ENCODE measurements at regions of chr10 and their contacts with region 1.

Region 1: DNA sequence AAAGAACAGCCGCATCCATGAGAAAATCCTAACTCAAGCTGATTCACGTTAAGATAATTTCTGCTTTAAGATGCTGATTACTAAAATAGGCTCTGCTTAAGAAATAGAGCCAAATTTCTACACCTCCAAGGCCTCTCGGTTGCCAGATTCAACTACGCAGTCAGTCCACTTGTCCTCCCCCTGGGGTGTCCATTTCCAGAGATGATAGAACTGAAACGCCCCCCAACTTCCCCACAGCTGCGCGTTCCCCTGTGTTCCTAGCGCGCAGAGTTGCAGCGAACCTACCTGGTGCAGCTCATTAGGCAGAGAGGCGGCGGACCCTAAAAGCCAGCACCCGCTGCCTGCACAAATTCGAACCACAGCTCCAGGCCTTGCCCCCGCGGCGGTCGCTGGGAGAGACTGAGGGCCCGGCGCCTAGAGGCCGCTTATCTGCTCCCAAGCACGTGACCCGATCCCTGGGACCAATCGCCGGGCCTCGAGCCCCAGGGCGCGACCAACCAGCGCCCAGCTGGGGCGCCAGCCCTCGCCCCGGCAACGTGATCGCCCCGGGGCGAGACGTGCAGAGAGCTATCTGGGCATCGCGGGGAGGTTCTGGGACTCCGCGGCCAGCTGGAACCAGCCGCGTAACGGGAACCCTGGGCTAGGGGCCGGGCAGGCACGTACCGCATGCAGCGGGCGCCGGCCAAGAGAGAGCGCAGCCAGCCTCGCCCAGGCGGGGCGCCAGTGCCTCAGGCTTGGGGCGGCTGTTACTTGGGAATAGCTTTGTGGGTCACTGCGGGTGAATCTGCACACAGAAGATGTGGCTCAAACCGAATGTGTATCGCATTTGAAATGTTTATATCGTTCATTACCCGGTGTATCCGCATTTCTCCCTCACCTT is at the start of gene PPP1R3C:
- DNase-seq: peak; percentile 88
- H3K4me3 ChIP-seq: peak within 1 kb of the TSS; percentile 47 to 57
- H3K27ac ChIP-seq: peak within 1 kb of the TSS; percentile 58 to 69
- H3K4me1 ChIP-seq: no peaks in the 10 kb centered on the region
- H3K27me3 ChIP-seq: no peaks in the 10 kb centered on the region
- CTCF ChIP-seq: peak in 3 of 4 experiments; percentile 7 to 37 (median 30)
- POLR2A ChIP-seq: peak; percentile 73
- total RNA-seq, gene PPP1R3C: 10.6 to 20.5 TPM

Region 2: GRCh38 chr10:91298224-91298871 is 334.6 kb before region 1 on chr10:
- intact Hi-C with region 1: loop called (anchors 5 kb)
- DNase-seq: peak; percentile 74
- H3K4me3 ChIP-seq: peak overlapping the region in 1 of 2 donors; percentile 24
- H3K27ac ChIP-seq: peak overlapping the region in 1 of 2 donors; percentile 20
- H3K4me1 ChIP-seq: no peaks in the 10 kb centered on the region
- H3K27me3 ChIP-seq: no peaks in the 10 kb centered on the region
- CTCF ChIP-seq: peak; percentile 88 to 95 (median 90)
- POLR2A ChIP-seq: no peak

Region 3: DNA sequence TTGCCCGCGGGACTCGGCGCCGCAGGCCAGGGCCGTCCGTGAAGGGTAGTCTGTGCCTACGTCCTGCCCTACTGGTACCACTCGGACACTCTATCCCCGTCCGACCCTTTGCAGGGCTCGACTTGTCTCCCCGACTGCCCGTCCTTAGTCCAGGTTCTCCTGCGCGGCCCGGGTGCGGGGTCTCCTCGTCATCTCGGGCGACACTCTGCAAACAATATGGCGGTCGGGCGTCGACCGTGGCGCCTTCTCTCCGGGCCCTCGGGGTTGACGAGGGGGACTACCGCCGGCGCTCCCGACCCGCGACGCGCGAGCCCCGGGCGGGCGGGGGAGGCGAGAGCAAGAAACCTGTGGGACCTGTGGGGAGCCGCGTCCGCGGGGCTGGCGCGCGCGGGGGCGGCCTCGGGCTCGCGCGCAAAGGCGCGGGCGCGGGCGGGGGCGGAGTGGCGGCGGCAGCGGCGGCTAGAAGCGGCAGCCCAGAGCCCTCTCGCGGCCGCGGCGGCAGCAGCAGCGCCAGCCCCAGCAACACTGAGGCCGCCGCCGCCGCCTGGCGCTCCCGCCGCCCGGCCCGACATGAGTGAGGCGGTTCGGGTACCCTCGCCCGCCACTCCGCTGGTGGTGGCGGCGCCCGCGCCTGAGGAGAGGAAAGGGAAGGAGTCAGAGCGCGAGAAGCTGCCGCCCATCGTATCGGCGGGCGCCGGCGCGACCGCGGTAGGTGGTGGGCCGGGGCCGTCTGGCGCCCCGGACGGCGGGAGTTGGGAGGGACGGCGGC is 222.9 kb before region 1 on chr10 and contains the start of gene HECTD2:
- intact Hi-C with region 1: loop called (anchors 5 kb)
- DNase-seq: peak; percentile 75
- H3K4me3 ChIP-seq: peak within 1 kb of the TSS; percentile 83 to 88
- H3K27ac ChIP-seq: peak within 1 kb of the TSS; percentile 99 to 100
- H3K4me1 ChIP-seq: no peaks in the 10 kb centered on the region
- H3K27me3 ChIP-seq: no peaks in the 10 kb centered on the region
- CTCF ChIP-seq: peak in 2 of 4 experiments; percentile 63 to 68
- POLR2A ChIP-seq: no peak
- total RNA-seq, gene HECTD2: 18.7 to 22.8 TPM

Region 4: DNA sequence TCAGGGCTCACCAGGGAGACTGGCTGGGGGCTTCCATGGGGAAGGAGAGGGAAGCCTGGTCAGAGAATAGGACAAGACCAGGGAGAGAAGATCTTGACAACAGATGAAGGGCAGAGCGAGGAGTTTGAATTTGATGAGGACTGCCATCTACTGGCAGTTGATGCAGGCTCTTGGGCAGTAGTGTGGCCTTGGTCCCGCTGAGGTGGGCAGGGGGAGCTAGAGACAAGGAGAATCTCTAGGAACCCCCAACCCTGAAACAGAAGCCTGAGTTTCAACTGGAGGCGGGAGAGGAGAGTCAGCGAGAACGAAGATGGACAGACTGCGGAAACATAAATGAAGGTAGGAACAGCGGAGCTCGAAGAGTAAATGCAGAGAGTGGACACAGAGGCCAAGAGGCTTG is 81.1 kb before region 1 on chr10:
- intact Hi-C with region 1: loop called (anchors 1 kb)
- DNase-seq: no peak
- H3K4me3 ChIP-seq: no peak overlapping the region
- H3K27ac ChIP-seq: no peak overlapping the region
- H3K4me1 ChIP-seq: peaks cover 7% of the 10 kb centered on the region
- H3K27me3 ChIP-seq: no peaks in the 10 kb centered on the region
- CTCF ChIP-seq: peak in 3 of 4 experiments; percentile 36 to 64 (median 53)
- POLR2A ChIP-seq: no peak

Region 5: GRCh38 chr10:91575044-91575610 is 57.8 kb before region 1 on chr10:
- intact Hi-C with region 1: no loop called
- DNase-seq: no peak
- H3K4me3 ChIP-seq: no peak overlapping the region
- H3K27ac ChIP-seq: no peak overlapping the region
- H3K4me1 ChIP-seq: no peaks in the 10 kb centered on the region
- H3K27me3 ChIP-seq: no peaks in the 10 kb centered on the region
- CTCF ChIP-seq: no peak
- POLR2A ChIP-seq: no peak

Region 6: DNA sequence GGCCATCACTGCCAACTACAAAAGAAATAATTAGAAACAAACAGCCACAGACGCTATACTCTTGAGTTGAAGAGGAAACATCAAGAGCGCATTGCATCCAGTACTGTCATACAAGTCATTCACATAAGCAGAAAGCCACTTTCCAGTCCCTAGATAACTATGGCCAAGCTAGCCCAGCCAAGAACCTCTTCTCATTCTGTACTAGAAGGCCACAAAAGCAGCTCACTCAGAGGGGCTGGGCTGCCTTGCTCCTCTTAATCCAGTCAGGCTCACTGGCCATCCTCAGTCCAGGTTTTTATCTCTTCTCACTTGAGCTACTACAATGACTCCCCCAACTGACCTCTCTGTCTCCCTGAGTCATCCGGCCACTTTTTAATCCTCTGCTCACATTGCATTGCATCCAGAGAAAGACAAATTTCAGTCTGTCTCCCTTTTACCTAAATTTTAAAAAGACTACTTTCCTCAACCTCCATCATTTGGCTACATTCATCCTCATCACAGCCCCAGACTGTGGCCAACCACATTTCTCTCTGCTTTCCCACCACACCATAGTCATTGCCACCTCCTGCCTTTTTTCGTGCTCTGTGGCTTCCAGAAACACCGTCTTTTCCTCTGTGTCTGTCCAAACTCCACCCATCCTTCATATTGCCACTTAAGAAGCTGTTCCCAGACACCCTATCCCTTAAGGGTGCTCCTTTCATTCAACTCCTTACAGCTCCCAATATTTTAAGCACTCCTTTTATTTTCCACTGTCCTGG is 25.1 kb before region 1 on chr10:
- intact Hi-C with region 1: loop called (anchors 2 kb)
- DNase-seq: no peak
- H3K4me3 ChIP-seq: no peak overlapping the region
- H3K27ac ChIP-seq: peak overlapping the region; percentile 64 to 78
- H3K4me1 ChIP-seq: peaks cover 3% of the 10 kb centered on the region
- H3K27me3 ChIP-seq: no peaks in the 10 kb centered on the region
- CTCF ChIP-seq: no peak
- POLR2A ChIP-seq: no peak

Region 7: GRCh38 chr10:91856637-91857036 is 223.7 kb after region 1 on chr10:
- intact Hi-C with region 1: no loop called
- DNase-seq: no peak
- H3K4me3 ChIP-seq: no peak overlapping the region
- H3K27ac ChIP-seq: no peak overlapping the region
- H3K4me1 ChIP-seq: no peaks in the 10 kb centered on the region
- H3K27me3 ChIP-seq: no peaks in the 10 kb centered on the region
- CTCF ChIP-seq: peak in 1 of 4 experiments; percentile 41
- POLR2A ChIP-seq: no peak

Region 8: DNA sequence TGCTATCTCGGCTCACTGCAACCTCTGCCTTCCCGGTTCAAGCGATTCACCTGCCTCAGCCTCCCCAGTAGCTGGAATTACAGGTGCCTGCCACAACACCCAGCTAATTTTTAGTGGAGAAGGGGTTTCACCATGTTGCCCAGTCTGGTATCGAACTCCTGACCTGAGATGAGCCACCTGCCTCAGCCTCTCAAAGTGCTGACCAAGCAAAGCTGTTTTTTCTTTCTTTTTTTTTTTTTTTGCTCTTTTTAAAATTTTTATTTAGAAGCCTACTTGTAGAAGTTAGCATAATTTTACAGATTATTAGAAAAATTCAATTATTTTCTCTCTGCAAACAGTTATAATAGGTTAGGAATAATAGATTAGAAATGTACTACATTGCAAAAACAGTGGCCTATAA is 277.6 kb after region 1 on chr10:
- intact Hi-C with region 1: loop called (anchors 10 kb)
- DNase-seq: no peak
- H3K4me3 ChIP-seq: no peak overlapping the region
- H3K27ac ChIP-seq: no peak overlapping the region
- H3K4me1 ChIP-seq: no peaks in the 10 kb centered on the region
- H3K27me3 ChIP-seq: no peaks in the 10 kb centered on the region
- CTCF ChIP-seq: no peak
- POLR2A ChIP-seq: no peak

Region 9: GRCh38 chr10:92530421-92530820 is 897.5 kb after region 1 on chr10:
- intact Hi-C with region 1: no loop called
- DNase-seq: no peak
- H3K4me3 ChIP-seq: no peak overlapping the region
- H3K27ac ChIP-seq: no peak overlapping the region
- H3K4me1 ChIP-seq: no peaks in the 10 kb centered on the region
- H3K27me3 ChIP-seq: no peaks in the 10 kb centered on the region
- CTCF ChIP-seq: no peak
- POLR2A ChIP-seq: no peak

Measured in prostate gland (tissue), 2 donors.